Mucosa of descending colon (tissue), 3 donors: ENCODE measurements at regions of chr19 and their contacts with region 1.

Region 1: GRCh38 chr19:49983645-49984229 is 22.8 kb upstream of the SIGLEC11 start:
- DNase-seq: peak in 2 of 3 donors; percentile 71 to 86
- ATAC-seq: peak; percentile 69
- H3K4me3 ChIP-seq: no peak overlapping the region
- H3K4me1 ChIP-seq: no peaks in the 10 kb centered on the region
- CTCF ChIP-seq: peak; percentile 72

Region 2: DNA sequence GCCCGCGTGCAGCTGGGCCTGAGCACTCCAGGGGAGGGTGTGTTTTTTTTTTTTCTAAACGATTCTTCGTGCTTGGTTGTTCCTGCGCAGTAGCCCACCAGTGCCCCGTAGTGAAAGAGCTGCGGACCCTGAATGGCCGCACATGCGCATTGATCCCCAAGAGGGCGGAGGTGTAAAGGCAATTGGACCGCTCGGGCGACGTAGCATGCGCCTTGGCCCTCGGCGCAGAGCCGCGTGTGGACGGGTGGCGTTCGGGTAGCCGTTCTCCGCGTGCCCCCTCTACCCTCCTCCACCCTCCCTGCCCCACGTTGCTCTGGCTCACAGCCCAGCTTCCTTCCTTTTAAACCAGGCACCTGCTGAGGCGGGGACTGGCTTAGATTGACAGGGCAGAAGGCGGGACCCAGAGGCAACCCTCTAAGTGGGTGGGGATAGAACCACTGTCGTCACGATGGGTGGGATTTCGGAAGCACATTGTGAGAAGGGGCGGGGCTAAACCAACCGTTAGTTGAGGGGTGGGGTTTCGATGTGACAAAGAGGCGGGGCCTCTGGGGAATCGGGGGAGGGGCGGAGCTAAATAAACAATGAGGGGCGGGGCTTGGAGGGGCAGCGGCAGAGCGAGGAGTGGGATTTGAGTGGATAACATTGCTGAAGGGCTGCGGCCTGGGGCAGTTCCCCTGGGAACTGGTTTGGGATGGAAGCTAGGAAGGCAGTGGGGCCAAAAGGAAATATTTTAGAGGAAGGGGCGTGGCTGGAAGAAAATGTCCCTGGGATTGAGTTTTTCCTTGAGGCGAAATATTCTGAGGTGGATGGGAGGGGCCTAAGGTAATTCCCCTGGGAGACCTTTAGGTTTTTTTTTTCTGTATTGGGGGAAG is 53.9 kb before region 1 on chr19:
- intact Hi-C with region 1: loop called (anchors 5 to 10 kb)
- DNase-seq: peak; percentile 91 to 94 (median 93)
- ATAC-seq: peak; percentile 89
- H3K4me3 ChIP-seq: peak overlapping the region; percentile 88
- H3K4me1 ChIP-seq: peaks cover 18% of the 10 kb centered on the region
- CTCF ChIP-seq: no peak

Region 3: DNA sequence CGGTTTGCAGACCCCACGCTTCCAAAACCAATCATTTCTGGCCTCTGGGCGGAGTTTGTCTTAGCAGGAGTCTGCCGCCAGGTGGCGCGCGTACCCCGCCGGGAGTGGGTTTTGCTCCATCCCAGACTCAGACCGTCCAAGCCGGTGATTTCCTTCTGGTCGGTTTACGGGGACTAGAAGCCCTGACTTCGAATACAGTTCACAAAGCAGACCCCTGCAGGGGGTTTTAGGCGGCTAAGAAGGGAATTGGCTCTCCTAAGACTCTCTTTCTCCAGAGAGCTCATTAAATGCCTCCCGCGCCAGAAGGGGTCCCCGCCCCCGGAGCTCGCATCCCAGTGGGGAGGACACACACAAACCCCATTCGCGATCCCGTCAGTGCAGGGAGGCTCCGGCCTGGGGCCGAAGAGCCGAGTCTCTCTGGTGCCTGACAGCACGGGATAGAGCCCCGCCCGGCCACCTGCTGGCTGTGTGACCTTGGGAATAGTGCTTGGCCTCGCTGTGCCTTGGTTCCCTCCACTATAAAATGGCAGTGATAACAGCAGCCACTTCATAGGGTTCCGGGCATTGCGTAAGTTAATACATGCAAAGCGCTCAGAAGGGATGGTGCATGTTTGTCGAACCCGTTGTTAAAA is 45.9 kb before region 1 on chr19:
- intact Hi-C with region 1: loop called (anchors 5 to 10 kb)
- DNase-seq: peak; percentile 72 to 87 (median 83)
- ATAC-seq: peak; percentile 97
- H3K4me3 ChIP-seq: no peak overlapping the region
- H3K4me1 ChIP-seq: peaks cover 7% of the 10 kb centered on the region
- CTCF ChIP-seq: peak; percentile 86

Region 4: GRCh38 chr19:50061650-50062049 is 77.9 kb after region 1 on chr19:
- intact Hi-C with region 1: no loop called
- DNase-seq: no peak
- ATAC-seq: peak; percentile 32
- H3K4me3 ChIP-seq: no peak overlapping the region
- H3K4me1 ChIP-seq: no peaks in the 10 kb centered on the region
- CTCF ChIP-seq: no peak